Common myeloid progenitor, CD34-positive (primary cell): ENCODE measurements at regions of chr4 and their contacts with region 1.

Region 1: DNA sequence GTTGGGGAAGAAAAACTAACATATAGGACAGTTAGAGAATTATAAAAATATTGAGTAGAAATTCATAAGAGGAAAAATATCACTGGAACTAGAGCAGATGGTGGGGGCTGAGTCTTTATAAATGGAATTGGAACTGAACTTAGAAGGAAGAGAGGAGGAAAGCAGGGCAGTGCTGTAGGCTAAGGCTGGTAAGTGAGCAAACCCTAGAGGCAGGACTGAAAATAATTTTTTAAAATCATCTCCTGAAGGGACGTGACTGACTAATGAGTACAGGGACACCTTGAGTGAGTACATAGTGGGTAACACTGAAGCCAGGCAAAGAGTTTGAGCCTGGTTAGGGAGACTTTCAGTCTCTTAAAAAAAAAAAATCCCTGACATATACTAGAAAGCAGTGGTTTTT is 63.3 kb downstream of the GALNT7 start:
- DNase-seq: peak; percentile 52 to 72 (median 65)
- H3K4me3 ChIP-seq: peak overlapping the region in 1 of 7 experiments; percentile 14
- H3K27ac ChIP-seq: peak overlapping the region; percentile 13 to 69
- H3K4me1 ChIP-seq: peaks cover 9 to 50% (median 35%) of the 10 kb centered on the region in 4 experiments
- H3K27me3 ChIP-seq: no peaks in the 10 kb centered on the region

Region 2: GRCh38 chr4:173243321-173243720 is 11.4 kb after region 1 on chr4:
- CTCF ChIA-PET with region 1: interaction called, 12 read pairs
- POLR2A ChIA-PET with region 1: no interaction called
- DNase-seq: no peak
- H3K4me3 ChIP-seq: no peak overlapping the region
- H3K27ac ChIP-seq: no peak overlapping the region
- H3K4me1 ChIP-seq: peaks cover 0 to 20% (median 4%) of the 10 kb centered on the region in 4 experiments
- H3K27me3 ChIP-seq: no peaks in the 10 kb centered on the region